PC-9 (cell line): ENCODE measurements at regions of chr10 and their contacts with region 1.

Region 1: GRCh38 chr10:133438711-133439273 is 14.4 kb upstream of the SPRN start:
- DNase-seq: no peak
- H3K4me3 ChIP-seq: no peak overlapping the region
- H3K27ac ChIP-seq: no peak overlapping the region
- H3K4me1 ChIP-seq: no peaks in the 10 kb centered on the region
- H3K27me3 ChIP-seq: no peaks in the 10 kb centered on the region
- CTCF ChIP-seq: no peak; the same call in 1 of the 2 replicates

Region 2: GRCh38 chr10:133067149-133068105 is 371.4 kb before region 1 on chr10:
- CTCF ChIA-PET with region 1: no interaction called
- POLR2A ChIA-PET with region 1: no interaction called
- intact Hi-C with region 1: no loop called
- DNase-seq: no peak
- H3K4me3 ChIP-seq: no peak overlapping the region
- H3K27ac ChIP-seq: no peak overlapping the region
- H3K4me1 ChIP-seq: no peaks in the 10 kb centered on the region
- H3K27me3 ChIP-seq: peaks cover 29% of the 10 kb centered on the region
- CTCF ChIP-seq: no peak

Region 3: GRCh38 chr10:133520155-133520738 is 81.5 kb after region 1 on chr10:
- CTCF ChIA-PET with region 1: no interaction called
- POLR2A ChIA-PET with region 1: no interaction called
- intact Hi-C with region 1: loop called (anchors 5 kb)
- DNase-seq: peak in 1 of 2 experiments; percentile 83
- H3K4me3 ChIP-seq: no peak overlapping the region; the same call in 1 of the 2 replicates
- H3K27ac ChIP-seq: no peak overlapping the region
- H3K4me1 ChIP-seq: 0 out of 2 replicates have a peak, but pooled peaks cover 4% of the 10 kb centered on the region
- H3K27me3 ChIP-seq: no peaks in the 10 kb centered on the region
- CTCF ChIP-seq: peak; percentile 64

Region 4: GRCh38 chr10:133565441-133566294 is 126.9 kb after region 1 on chr10 and contains the start of gene SYCE1:
- CTCF ChIA-PET with region 1: no interaction called
- POLR2A ChIA-PET with region 1: no interaction called
- intact Hi-C with region 1: no loop called
- DNase-seq: no peak
- H3K4me3 ChIP-seq: no peak within 1 kb of the TSS
- H3K27ac ChIP-seq: no peak within 1 kb of the TSS
- H3K4me1 ChIP-seq: no peaks in the 10 kb centered on the region
- H3K27me3 ChIP-seq: no peaks in the 10 kb centered on the region
- CTCF ChIP-seq: no peak
- total RNA-seq, gene SYCE1: not detected in 2 replicates